Ovary (tissue), 10 donors: ENCODE measurements at regions of chr2 and their contacts with region 1.

Region 1: DNA sequence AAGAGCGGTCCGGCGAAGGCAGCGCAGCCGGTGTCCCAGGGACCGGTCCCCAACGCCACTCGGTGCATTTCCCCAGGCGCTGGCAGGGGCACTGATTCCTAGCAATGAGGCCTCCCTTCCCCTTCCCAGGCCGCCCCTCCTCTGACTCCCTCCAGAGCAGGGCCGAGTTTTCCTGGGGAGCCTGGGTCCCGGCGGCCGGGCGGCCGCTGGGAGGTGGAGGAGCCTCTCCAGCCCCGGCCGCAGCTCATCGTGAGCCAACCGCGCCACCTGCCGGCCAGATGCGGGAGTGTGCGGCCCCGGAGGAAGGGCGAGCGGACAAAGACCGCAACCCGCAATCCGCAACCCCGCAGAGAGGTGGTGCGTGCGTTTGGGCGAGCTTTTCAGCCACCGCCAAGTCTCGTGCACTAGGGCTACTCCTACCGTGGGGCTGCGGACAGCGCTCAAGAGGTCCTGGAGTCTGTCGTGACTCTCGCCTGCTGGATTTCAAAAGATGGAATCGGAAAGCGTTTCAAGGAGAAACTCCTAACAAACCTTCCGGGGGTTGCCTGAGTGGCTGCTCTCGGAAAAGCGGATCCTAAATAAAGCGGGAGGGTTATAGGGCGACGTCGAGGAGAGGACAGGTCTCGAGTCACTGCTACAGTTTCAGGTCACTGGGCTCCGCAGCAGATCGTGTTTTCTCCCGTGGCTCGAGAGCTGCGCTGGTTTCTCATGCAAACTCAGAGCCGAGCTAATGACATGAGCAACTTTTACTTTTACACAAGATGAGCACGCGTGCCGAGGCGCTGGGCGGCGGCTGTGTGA is 1.5 kb upstream of the EPHA4 start:
- DNase-seq: peak; percentile 85 to 93 (median 90)
- H3K4me3 ChIP-seq: peak overlapping the region; percentile 48
- H3K27ac ChIP-seq: peak overlapping the region; percentile 77 to 91
- H3K4me1 ChIP-seq: peaks cover 12% of the 10 kb centered on the region
- H3K27me3 ChIP-seq: no peaks in the 10 kb centered on the region
- CTCF ChIP-seq: peak; percentile 98
- EP300 ChIP-seq: no peak
- POLR2A ChIP-seq: peak; percentile 17

Region 2: GRCh38 chr2:219736209-219736608 is 1837.4 kb before region 1 on chr2:
- intact Hi-C with region 1: loop called in 3 of 4 experiments (anchors 2 to 10 kb)
- DNase-seq: peak in 1 of 5 donors; percentile 37
- H3K4me3 ChIP-seq: no peak overlapping the region
- H3K27ac ChIP-seq: no peak overlapping the region
- H3K4me1 ChIP-seq: peaks cover 9% of the 10 kb centered on the region
- H3K27me3 ChIP-seq: no peaks in the 10 kb centered on the region
- CTCF ChIP-seq: peak; percentile 44 to 68 (median 55)
- EP300 ChIP-seq: no peak
- POLR2A ChIP-seq: no peak

Region 3: GRCh38 chr2:219997341-219997851 is 1576.2 kb before region 1 on chr2:
- intact Hi-C with region 1: loop called in 1 of 4 experiments (anchors 5 kb)
- DNase-seq: peak; percentile 79 to 87 (median 84)
- H3K4me3 ChIP-seq: no peak overlapping the region
- H3K27ac ChIP-seq: no peak overlapping the region
- H3K4me1 ChIP-seq: peaks cover 13% of the 10 kb centered on the region
- H3K27me3 ChIP-seq: no peaks in the 10 kb centered on the region
- CTCF ChIP-seq: peak in 2 of 3 donors; percentile 50 to 57
- EP300 ChIP-seq: no peak
- POLR2A ChIP-seq: no peak

Region 4: GRCh38 chr2:220076738-220077137 is 1496.9 kb before region 1 on chr2:
- intact Hi-C with region 1: loop called in 1 of 4 experiments (anchors 5 kb)
- DNase-seq: peak in 3 of 5 donors; percentile 39 to 53 (median 45)
- H3K4me3 ChIP-seq: no peak overlapping the region
- H3K27ac ChIP-seq: peak overlapping the region in 1 of 2 donors; percentile 63
- H3K4me1 ChIP-seq: peaks cover 41% of the 10 kb centered on the region
- H3K27me3 ChIP-seq: no peaks in the 10 kb centered on the region
- CTCF ChIP-seq: peak in 1 of 3 donors; percentile 14
- EP300 ChIP-seq: no peak
- POLR2A ChIP-seq: no peak

Region 5: DNA sequence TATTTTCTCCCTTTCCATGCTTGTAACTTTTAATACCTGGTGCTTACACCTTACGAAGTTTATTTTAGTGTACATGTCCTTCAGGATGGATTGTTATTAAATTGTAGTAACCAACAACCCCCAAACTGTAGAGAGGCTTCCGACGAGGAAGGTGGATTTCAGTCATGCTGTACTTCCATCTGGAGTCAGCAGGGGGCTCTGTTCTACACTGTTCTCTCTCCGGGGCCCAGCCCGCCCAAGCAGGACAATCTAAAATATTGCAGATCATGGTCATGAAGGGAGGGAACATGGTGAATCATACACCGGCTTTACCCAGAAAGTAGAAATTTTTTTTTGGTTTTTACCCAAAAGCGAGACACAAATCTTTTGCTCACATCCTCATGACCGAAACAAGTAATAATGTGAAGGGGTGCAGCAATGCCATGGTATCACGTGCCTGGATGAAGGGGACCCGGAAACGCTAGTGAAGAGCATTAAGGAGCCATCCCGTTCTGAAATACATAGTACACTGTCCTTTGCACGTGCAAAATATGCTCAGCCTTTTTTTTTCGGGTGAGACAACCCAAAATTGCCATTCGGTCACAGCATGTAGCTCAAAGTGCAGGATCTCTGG is 886.3 kb before region 1 on chr2:
- intact Hi-C with region 1: loop called in 3 of 4 experiments (anchors 5 kb)
- DNase-seq: peak; percentile 65 to 75 (median 73)
- H3K4me3 ChIP-seq: no peak overlapping the region
- H3K27ac ChIP-seq: no peak overlapping the region
- H3K4me1 ChIP-seq: no peaks in the 10 kb centered on the region
- H3K27me3 ChIP-seq: no peaks in the 10 kb centered on the region
- CTCF ChIP-seq: peak; percentile 48 to 78 (median 52)
- EP300 ChIP-seq: no peak
- POLR2A ChIP-seq: no peak

Region 6: DNA sequence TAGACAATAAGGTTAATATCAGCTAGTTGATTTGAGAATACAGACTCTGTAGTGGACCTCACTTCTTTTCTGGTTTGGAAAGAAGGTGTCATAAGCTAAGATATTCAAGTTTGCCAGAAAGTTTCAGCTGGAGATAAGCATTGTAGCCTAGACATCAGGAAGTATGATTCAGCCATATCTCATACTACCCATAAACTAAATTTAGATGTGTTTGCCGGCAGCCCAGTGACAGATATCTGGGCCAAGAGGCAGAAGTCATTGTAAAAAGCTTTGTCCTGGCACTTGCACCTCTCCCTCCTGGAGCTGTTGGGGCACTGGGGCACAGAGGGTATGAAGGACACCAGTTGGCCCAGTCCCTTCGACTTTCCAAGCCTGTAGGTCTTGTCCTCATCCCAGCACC is 129.5 kb before region 1 on chr2:
- intact Hi-C with region 1: no loop called
- DNase-seq: no peak
- H3K4me3 ChIP-seq: no peak overlapping the region
- H3K27ac ChIP-seq: no peak overlapping the region
- H3K4me1 ChIP-seq: no peaks in the 10 kb centered on the region
- H3K27me3 ChIP-seq: no peaks in the 10 kb centered on the region
- CTCF ChIP-seq: no peak
- EP300 ChIP-seq: no peak
- POLR2A ChIP-seq: no peak

Region 7: GRCh38 chr2:221810245-221810644 is 236.6 kb after region 1 on chr2:
- intact Hi-C with region 1: no loop called
- DNase-seq: no peak
- H3K4me3 ChIP-seq: no peak overlapping the region
- H3K27ac ChIP-seq: no peak overlapping the region
- H3K4me1 ChIP-seq: no peaks in the 10 kb centered on the region
- H3K27me3 ChIP-seq: no peaks in the 10 kb centered on the region
- CTCF ChIP-seq: no peak
- EP300 ChIP-seq: no peak
- POLR2A ChIP-seq: no peak

Region 8: GRCh38 chr2:221969087-221969829 is 395.6 kb after region 1 on chr2:
- intact Hi-C with region 1: loop called in 1 of 4 experiments (anchors 5 kb)
- DNase-seq: peak in 1 of 5 donors; percentile 36
- H3K4me3 ChIP-seq: no peak overlapping the region
- H3K27ac ChIP-seq: no peak overlapping the region
- H3K4me1 ChIP-seq: no peaks in the 10 kb centered on the region
- H3K27me3 ChIP-seq: no peaks in the 10 kb centered on the region
- CTCF ChIP-seq: peak; percentile 17 to 53 (median 37)
- EP300 ChIP-seq: no peak
- POLR2A ChIP-seq: no peak

Region 9: DNA sequence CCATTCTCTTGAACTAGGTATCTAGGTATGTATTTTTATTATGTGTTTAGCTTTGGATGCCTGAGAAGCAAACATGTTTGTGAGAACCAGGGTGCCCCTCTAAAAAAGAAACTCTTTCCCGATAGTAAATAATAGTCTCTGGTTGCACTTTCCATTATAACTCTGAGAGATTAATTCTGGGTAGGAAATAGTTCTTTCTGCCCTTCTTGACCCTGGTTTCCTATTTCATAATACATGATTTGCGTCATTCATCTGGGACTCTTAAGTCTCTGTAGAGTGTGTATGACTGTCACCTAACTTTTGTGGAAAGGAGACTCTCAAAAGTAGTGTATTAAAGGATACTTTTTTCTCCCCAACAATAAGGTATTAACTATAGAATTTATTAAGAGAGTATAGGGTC is 1318.7 kb after region 1 on chr2:
- intact Hi-C with region 1: no loop called
- DNase-seq: no peak
- H3K4me3 ChIP-seq: no peak overlapping the region
- H3K27ac ChIP-seq: no peak overlapping the region
- H3K4me1 ChIP-seq: peaks cover 3% of the 10 kb centered on the region
- H3K27me3 ChIP-seq: no peaks in the 10 kb centered on the region
- CTCF ChIP-seq: no peak
- EP300 ChIP-seq: no peak
- POLR2A ChIP-seq: no peak

Region 10: DNA sequence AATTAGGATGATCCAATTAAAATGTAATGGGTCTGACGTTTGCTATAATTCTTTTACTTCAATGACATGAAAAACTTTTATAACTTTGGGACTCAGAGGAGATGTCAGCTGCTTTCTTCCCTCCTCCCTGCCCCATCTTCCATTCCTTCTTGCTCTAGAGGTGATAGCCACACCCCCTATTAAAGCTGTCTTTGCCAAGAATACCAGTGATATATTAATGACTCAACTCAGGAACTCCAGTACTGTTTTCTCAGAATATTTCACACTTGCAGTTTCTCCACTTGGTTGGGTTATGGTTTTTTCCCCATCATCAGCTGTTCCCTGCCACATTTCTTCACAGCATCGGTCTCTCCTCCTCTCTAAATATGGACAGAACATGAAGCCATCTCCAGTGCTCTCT is 1662.4 kb after region 1 on chr2:
- intact Hi-C with region 1: loop called in 1 of 4 experiments (anchors 10 kb)
- DNase-seq: no peak
- H3K4me3 ChIP-seq: no peak overlapping the region
- H3K27ac ChIP-seq: no peak overlapping the region
- H3K4me1 ChIP-seq: no peaks in the 10 kb centered on the region
- H3K27me3 ChIP-seq: no peaks in the 10 kb centered on the region
- CTCF ChIP-seq: no peak
- EP300 ChIP-seq: no peak
- POLR2A ChIP-seq: no peak